Naive thymus-derived CD4-positive, alpha-beta T cell (primary cell): ENCODE measurements at regions of chr5 and their contacts with region 1.

Region 1: DNA sequence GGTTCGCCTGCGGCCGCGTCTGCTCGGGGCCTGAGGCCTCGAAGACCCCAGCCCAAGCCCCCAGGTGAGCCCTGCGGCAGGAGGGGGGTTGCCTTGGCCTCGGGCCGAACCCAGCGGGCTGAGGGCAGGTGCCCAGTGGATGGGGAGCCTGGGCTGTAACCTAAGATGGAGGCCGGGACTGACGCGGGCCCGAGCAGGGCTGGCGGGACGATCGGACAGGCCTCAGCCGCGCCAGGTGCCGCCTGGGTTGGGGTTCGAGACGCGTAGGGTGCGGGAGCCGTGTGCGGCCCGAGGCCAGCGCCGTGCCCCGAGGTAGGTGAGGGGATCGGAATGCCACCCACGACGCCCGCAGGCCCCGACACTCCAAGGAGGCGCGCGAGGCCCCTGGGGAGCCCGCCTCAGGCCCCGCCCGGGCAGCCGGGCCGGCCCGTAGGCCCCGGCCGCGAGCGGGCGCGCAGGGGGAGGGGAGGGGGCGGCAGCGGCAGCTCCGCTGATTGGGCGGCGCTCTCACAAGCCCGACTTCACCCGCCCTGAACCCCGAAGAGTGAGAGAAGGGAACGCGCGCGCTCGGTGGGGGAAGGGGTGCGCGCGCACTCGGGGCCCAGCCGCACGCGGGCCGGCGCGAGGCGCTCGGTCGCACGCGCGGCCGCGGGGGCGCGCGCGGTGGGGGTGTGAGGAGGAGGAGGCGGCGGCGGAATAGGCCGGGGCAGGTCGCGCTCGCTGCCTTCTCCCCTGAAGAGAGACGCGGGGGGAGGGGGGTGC is at the start of gene NSD1:
- DNase-seq: peak; percentile 86 to 94 (median 93)
- ATAC-seq: peak; percentile 89
- H3K4me3 ChIP-seq: peak within 1 kb of the TSS; percentile 61
- H3K4me3 Mint-ChIP-seq: peak within 1 kb of the TSS; percentile 60 to 88 (median 85)
- H3K27ac ChIP-seq: peak within 1 kb of the TSS; percentile 80
- H3K27ac Mint-ChIP-seq: peak within 1 kb of the TSS; percentile 48 to 95 (median 89)
- H3K4me1 ChIP-seq: peaks cover 47 to 57% of the 10 kb centered on the region in 2 donors
- H3K4me1 Mint-ChIP-seq: peaks cover 34 to 72% (median 65%) of the 10 kb centered on the region in 7 donors
- H3K27me3 ChIP-seq: no peaks in the 10 kb centered on the region
- H3K27me3 Mint-ChIP-seq: no peaks in the 10 kb centered on the region
- total RNA-seq, gene NSD1: 105 to 126 (median 117) TPM

Region 2: DNA sequence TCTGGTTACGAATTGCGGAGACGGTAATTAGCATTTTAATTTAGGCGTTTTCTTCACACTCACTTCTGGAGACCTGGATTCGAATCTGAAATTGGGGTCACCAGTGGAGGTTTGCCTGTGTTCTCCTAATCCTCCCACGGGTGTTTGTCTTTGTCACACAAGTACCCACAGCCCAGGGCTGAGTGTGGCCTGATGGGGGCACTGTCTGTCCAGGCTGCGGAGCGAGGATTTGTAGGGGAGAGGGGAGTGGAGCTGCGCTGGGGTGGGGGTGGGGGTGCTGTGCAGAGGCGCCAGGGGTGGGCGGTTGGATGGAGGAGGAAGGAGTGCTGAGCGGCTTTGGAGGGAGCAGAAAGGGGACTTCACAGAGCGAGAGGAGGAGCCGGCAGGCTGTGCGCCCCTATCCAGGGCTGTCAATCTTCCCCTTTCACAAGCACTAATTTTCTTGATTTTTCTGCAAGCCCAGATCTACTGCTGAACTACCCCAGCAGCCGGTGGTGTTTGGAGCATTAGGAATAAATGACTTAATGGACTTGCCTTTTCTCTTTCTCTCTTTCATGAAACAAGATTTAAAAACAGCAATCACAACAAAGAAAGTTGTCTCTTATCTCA is 432.9 kb before region 1 on chr5:
- CTCF ChIA-PET with region 1: no interaction called
- POLR2A ChIA-PET with region 1: no interaction called
- intact Hi-C with region 1: no loop called
- DNase-seq: no peak
- ATAC-seq: no peak
- H3K4me3 ChIP-seq: no peak overlapping the region
- H3K4me3 Mint-ChIP-seq: no peak overlapping the region
- H3K27ac ChIP-seq: no peak overlapping the region
- H3K27ac Mint-ChIP-seq: no peak overlapping the region
- H3K4me1 ChIP-seq: no peaks in the 10 kb centered on the region
- H3K4me1 Mint-ChIP-seq: no peaks in the 10 kb centered on the region
- H3K27me3 ChIP-seq: no peaks in the 10 kb centered on the region
- H3K27me3 Mint-ChIP-seq: peaks cover 35 to 68% (median 66%) of the 10 kb centered on the region in 5 donors

Region 3: GRCh38 chr5:177146891-177147638 is 13.8 kb after region 1 on chr5:
- CTCF ChIA-PET with region 1: no interaction called
- POLR2A ChIA-PET with region 1: interaction called, 6 read pairs
- intact Hi-C with region 1: loop called in 1 of 2 experiments (anchors 1 kb)
- DNase-seq: no peak
- ATAC-seq: no peak
- H3K4me3 ChIP-seq: no peak overlapping the region
- H3K4me3 Mint-ChIP-seq: no peak overlapping the region
- H3K27ac ChIP-seq: no peak overlapping the region
- H3K27ac Mint-ChIP-seq: peak overlapping the region in 3 of 9 donors; percentile 17 to 56 (median 51)
- H3K4me1 ChIP-seq: no peaks in the 10 kb centered on the region
- H3K4me1 Mint-ChIP-seq: peaks cover 7 to 32% (median 22%) of the 10 kb centered on the region in 7 donors
- H3K27me3 ChIP-seq: no peaks in the 10 kb centered on the region
- H3K27me3 Mint-ChIP-seq: no peaks in the 10 kb centered on the region

Region 4: DNA sequence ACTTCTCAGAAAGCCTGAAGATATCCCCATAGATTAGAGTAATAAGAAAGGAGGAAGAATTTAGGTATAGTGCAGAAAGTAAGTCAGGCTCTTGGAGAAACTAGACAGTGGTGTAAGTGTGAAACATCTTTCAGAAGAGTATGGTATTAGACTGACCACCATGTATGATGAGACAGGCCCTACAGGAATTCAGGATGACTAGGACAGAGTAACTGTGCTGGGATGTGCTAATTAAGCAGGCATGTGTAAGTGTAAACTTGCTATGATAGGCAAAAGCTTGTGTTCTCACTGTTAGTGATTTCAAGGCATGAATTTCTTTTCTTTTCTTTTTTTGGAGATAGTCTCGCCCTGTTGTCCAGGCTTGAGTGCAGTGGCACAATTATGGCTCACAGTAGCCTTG is 99.5 kb after region 1 on chr5:
- CTCF ChIA-PET with region 1: no interaction called
- POLR2A ChIA-PET with region 1: no interaction called
- intact Hi-C with region 1: no loop called
- DNase-seq: no peak
- ATAC-seq: no peak
- H3K4me3 ChIP-seq: no peak overlapping the region
- H3K4me3 Mint-ChIP-seq: no peak overlapping the region
- H3K27ac ChIP-seq: no peak overlapping the region
- H3K27ac Mint-ChIP-seq: peak overlapping the region in 4 of 9 donors; percentile 17 to 54 (median 45)
- H3K4me1 ChIP-seq: no peaks in the 10 kb centered on the region
- H3K4me1 Mint-ChIP-seq: peaks cover 14 to 54% (median 27%) of the 10 kb centered on the region in 7 donors
- H3K27me3 ChIP-seq: no peaks in the 10 kb centered on the region
- H3K27me3 Mint-ChIP-seq: no peaks in the 10 kb centered on the region

Region 5: DNA sequence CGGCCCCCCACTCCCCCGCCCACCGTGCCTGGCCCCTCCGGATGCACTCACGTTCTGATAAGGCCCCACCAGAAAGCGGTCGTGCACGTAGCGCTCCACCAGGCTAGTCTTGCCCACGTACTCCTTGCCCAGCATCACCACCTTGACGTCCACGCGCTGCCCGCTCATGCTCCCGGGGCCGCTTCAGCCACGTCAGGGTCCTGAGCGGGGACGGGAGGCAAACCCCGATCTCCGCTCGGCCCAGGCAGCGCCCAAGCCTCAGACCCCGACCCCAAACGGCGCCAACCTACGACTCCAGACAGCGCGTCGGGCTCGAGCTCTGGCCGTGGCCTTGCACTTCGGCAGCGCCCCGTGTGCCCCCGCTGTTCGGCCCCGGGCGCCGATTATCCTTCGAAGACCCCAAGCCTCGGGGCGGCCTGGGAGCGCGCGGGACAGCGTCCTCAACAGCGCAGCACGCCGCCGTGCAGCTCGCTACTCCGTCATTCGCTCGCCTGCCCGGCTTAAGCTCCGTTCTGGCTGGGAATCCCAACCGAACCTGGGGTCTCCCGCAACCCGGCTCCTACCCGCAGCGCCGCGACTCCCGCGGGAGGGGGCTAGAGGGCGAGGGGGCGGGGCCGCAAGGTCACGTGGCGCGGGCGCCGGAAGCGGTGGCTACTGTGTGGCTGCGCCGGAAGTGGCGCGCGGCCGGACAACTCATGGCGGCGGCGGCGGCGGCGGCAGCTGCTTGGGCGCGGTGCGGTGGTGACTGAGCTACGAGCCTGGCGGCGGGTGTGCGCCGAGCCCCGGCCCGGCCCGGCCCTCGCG is 170.1 kb after region 1 on chr5 and contains the starts of genes PRELID1 and RAB24:
- CTCF ChIA-PET with region 1: no interaction called
- POLR2A ChIA-PET with region 1: interaction called, 6 read pairs
- intact Hi-C with region 1: loop called (anchors 2 to 5 kb)
- DNase-seq: peak; percentile 78 to 95 (median 85)
- ATAC-seq: peak; percentile 80
- H3K4me3 ChIP-seq: peak within 1 kb of the TSS; percentile 98
- H3K4me3 Mint-ChIP-seq: peak within 1 kb of the TSS; percentile 84 to 95 (median 88)
- H3K27ac ChIP-seq: peak within 1 kb of the TSS; percentile 78
- H3K27ac Mint-ChIP-seq: peak within 1 kb of the TSS; percentile 73 to 96 (median 90)
- H3K4me1 ChIP-seq: peaks cover 46 to 49% of the 10 kb centered on the region in 2 donors
- H3K4me1 Mint-ChIP-seq: peaks cover 52 to 76% (median 74%) of the 10 kb centered on the region in 7 donors
- H3K27me3 ChIP-seq: no peaks in the 10 kb centered on the region
- H3K27me3 Mint-ChIP-seq: no peaks in the 10 kb centered on the region
- total RNA-seq, gene PRELID1: 49.0 to 172 (median 57.2) TPM
- total RNA-seq, gene RAB24: 18.0 to 47.5 (median 24.3) TPM